Activated CD4-positive, alpha-beta T cell treated with anti-CD3 and anti-CD28 coated beads, Interleukin-2, amount 10 ng/mL, durations not matched to agents 24 days and 14 days (primary cell): ENCODE measurements at regions of chr1 and their contacts with region 1.

Region 1: GRCh38 chr1:92960395-92961130 is 699 bp downstream of the DIPK1A start:
- DNase-seq: peak; percentile 90
- H3K4me3 Mint-ChIP-seq: peak overlapping the region; percentile 94
- H3K27ac Mint-ChIP-seq: peak overlapping the region; percentile 99
- H3K4me1 Mint-ChIP-seq: peaks cover 36% of the 10 kb centered on the region
- H3K27me3 Mint-ChIP-seq: no peaks in the 10 kb centered on the region

Region 2: GRCh38 chr1:92485381-92486257 is 474.9 kb before region 1 on chr1:
- intact Hi-C with region 1: loop called (anchors 5 kb)
- DNase-seq: peak; percentile 96
- H3K4me3 Mint-ChIP-seq: peak overlapping the region; percentile 95
- H3K27ac Mint-ChIP-seq: peak overlapping the region; percentile 98
- H3K4me1 Mint-ChIP-seq: peaks cover 33% of the 10 kb centered on the region
- H3K27me3 Mint-ChIP-seq: no peaks in the 10 kb centered on the region

Region 3: GRCh38 chr1:92944901-92945747 is 15.4 kb before region 1 on chr1:
- intact Hi-C with region 1: loop called (anchors 2 kb)
- DNase-seq: peak; percentile 43
- H3K4me3 Mint-ChIP-seq: no peak overlapping the region
- H3K27ac Mint-ChIP-seq: no peak overlapping the region
- H3K4me1 Mint-ChIP-seq: peaks cover 49% of the 10 kb centered on the region
- H3K27me3 Mint-ChIP-seq: no peaks in the 10 kb centered on the region

Region 4: GRCh38 chr1:92994105-92994712 is 33.6 kb after region 1 on chr1:
- intact Hi-C with region 1: loop called (anchors 2 kb)
- DNase-seq: peak; percentile 93
- H3K4me3 Mint-ChIP-seq: no peak overlapping the region
- H3K27ac Mint-ChIP-seq: peak overlapping the region; percentile 80
- H3K4me1 Mint-ChIP-seq: peaks cover 38% of the 10 kb centered on the region
- H3K27me3 Mint-ChIP-seq: no peaks in the 10 kb centered on the region

Region 5: GRCh38 chr1:93061895-93062792 is 101.6 kb after region 1 on chr1:
- intact Hi-C with region 1: no loop called
- DNase-seq: peak; percentile 80
- H3K4me3 Mint-ChIP-seq: no peak overlapping the region
- H3K27ac Mint-ChIP-seq: no peak overlapping the region
- H3K4me1 Mint-ChIP-seq: peaks cover 2% of the 10 kb centered on the region
- H3K27me3 Mint-ChIP-seq: peaks cover 43% of the 10 kb centered on the region

Region 6: DNA sequence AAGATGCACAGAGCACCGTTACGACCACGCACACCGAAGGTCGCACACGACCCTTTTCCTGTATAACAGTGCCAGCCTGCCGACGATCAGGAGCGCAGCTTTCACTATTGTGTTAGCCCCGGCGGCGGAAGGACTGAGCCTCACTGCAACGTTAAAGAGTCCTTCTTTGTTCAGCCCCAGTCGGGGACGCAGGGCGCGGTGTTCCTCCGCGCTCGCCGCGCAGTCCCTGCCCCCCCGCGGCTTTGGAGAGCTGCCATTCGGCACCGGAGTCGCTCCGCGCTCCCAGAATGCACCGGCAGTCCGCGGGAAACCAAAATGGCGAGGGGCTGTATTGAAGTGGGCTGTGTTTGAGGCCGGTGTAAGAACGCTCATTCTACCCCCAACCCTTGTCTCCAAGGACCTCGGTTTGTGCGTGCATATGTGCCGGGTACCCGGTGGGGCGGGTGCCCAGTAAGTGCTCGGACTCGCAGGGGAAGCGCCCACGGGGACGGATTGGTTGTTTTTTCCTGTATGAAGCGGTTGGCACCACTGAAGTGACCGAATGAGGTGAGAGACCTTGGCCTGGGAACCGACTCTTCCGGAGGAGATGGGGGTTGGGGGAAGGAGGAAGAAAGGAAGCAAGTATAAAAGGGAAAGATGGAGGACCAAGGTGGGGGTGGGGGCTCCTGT is 118.6 kb after region 1 on chr1 and contains the start of gene MTF2:
- intact Hi-C with region 1: loop called (anchors 2 kb)
- DNase-seq: peak; percentile 98
- H3K4me3 Mint-ChIP-seq: peak within 1 kb of the TSS; percentile 99
- H3K27ac Mint-ChIP-seq: peak within 1 kb of the TSS; percentile 94
- H3K4me1 Mint-ChIP-seq: peaks cover 35% of the 10 kb centered on the region
- H3K27me3 Mint-ChIP-seq: no peaks in the 10 kb centered on the region
- total RNA-seq, gene MTF2: 63.7 and 64.3 TPM in 2 replicates

Region 7: GRCh38 chr1:93219443-93219842 is 258.9 kb after region 1 on chr1:
- intact Hi-C with region 1: loop called (anchors 5 kb)
- DNase-seq: peak; percentile 80
- H3K4me3 Mint-ChIP-seq: peak overlapping the region; percentile 78
- H3K27ac Mint-ChIP-seq: peak overlapping the region; percentile 89
- H3K4me1 Mint-ChIP-seq: peaks cover 31% of the 10 kb centered on the region
- H3K27me3 Mint-ChIP-seq: no peaks in the 10 kb centered on the region